CD8-positive, alpha-beta T cell (primary cell): ENCODE measurements at regions of chr5 and their contacts with region 1.

Region 1: DNA sequence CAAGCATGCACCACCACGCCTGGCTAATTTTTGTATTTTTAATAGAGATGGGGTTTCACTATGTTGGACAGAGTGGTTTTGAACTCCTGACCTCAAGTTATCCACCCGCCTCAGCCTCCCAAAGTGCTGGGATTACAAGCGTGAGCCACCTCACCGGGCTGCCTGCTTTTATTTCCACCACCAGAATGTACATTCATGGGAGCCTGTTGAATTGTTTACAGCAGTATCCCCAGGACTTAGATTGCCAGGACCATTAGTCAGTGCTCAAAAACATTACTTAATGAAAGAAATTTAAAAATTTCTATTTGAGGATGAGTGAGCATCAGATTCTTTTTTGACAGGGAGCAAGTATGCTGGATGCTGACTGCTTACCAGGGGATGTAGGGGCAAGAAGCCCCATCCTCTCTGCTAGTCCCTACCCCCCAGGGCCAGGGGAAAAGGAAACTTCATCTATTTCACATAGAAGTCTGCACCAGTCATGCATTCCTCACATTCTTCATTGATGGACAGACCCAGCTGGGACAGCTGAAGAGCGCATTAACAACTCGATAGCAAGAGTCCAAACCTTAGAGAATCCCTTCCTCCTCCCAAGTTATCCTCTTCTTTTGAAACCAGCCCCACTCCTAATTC is 10.3 kb upstream of the RGMB start:
- DNase-seq: no peak
- ATAC-seq: no peak
- H3K4me3 ChIP-seq: no peak overlapping the region
- H3K4me3 Mint-ChIP-seq: no peak overlapping the region
- H3K27ac ChIP-seq: no peak overlapping the region
- H3K27ac Mint-ChIP-seq: no peak overlapping the region
- H3K4me1 ChIP-seq: peaks cover 3% of the 10 kb centered on the region
- H3K4me1 Mint-ChIP-seq: peaks cover 3% of the 10 kb centered on the region
- H3K27me3 ChIP-seq: peaks cover 6 to 10% of the 10 kb centered on the region in 2 experiments
- H3K27me3 Mint-ChIP-seq: peaks cover 32% of the 10 kb centered on the region
- CTCF ChIP-seq: no peak

Region 2: GRCh38 chr5:98750693-98751092 is 12.4 kb before region 1 on chr5:
- CTCF ChIA-PET with region 1: interaction called, 36 read pairs
- POLR2A ChIA-PET with region 1: no interaction called
- intact Hi-C with region 1: loop called (anchors 1 kb)
- DNase-seq: peak in 1 of 9 experiments; percentile 9
- ATAC-seq: peak; percentile 34
- H3K4me3 ChIP-seq: no peak overlapping the region
- H3K4me3 Mint-ChIP-seq: no peak overlapping the region
- H3K27ac ChIP-seq: no peak overlapping the region
- H3K27ac Mint-ChIP-seq: no peak overlapping the region
- H3K4me1 ChIP-seq: no peaks in the 10 kb centered on the region
- H3K4me1 Mint-ChIP-seq: no peaks in the 10 kb centered on the region
- H3K27me3 ChIP-seq: no peaks in the 10 kb centered on the region
- H3K27me3 Mint-ChIP-seq: peaks cover 9% of the 10 kb centered on the region
- CTCF ChIP-seq: peak; percentile 23